Vagina (tissue), 2 donors: ENCODE measurements at regions of chr13 and their contacts with region 1.

Region 1: GRCh38 chr13:87919956-87920355 is 248.8 kb downstream of the SLITRK5 start:
- DNase-seq: no peak
- H3K4me3 ChIP-seq: no peak overlapping the region
- H3K27ac ChIP-seq: no peak overlapping the region
- H3K4me1 ChIP-seq: no peaks in the 10 kb centered on the region
- H3K27me3 ChIP-seq: no peaks in the 10 kb centered on the region
- CTCF ChIP-seq: no peak
- POLR2A ChIP-seq: no peak

Region 2: GRCh38 chr13:89688918-89689317 is 1769.0 kb after region 1 on chr13:
- intact Hi-C with region 1: loop called (anchors 10 kb)
- DNase-seq: no peak
- H3K4me3 ChIP-seq: no peak overlapping the region
- H3K27ac ChIP-seq: no peak overlapping the region
- H3K4me1 ChIP-seq: no peaks in the 10 kb centered on the region
- H3K27me3 ChIP-seq: no peaks in the 10 kb centered on the region
- CTCF ChIP-seq: no peak
- POLR2A ChIP-seq: no peak